Gastrocnemius medialis (tissue), 4 donors: ENCODE measurements at regions of chr3 and their contacts with region 1.

Region 1: GRCh38 chr3:22960105-22960984 is 242.8 kb upstream of the UBE2E2 start:
- DNase-seq: peak in 1 of 2 donors; percentile 20
- ATAC-seq: peak in 1 of 2 donors; percentile 47
- H3K4me3 ChIP-seq: peak overlapping the region in 3 of 4 donors; percentile 23 to 33 (median 24)
- H3K27ac ChIP-seq: no peak overlapping the region
- H3K4me1 ChIP-seq: peaks cover 4 to 7% of the 10 kb centered on the region in 2 donors
- H3K27me3 ChIP-seq: no peaks in the 10 kb centered on the region
- CTCF ChIP-seq: peak; percentile 51 to 73 (median 65)
- POLR2A ChIP-seq: no peak

Region 2: GRCh38 chr3:22175947-22176346 is 784.4 kb before region 1 on chr3:
- in situ Hi-C with region 1: no loop called
- intact Hi-C with region 1: loop called (anchors 10 kb)
- DNase-seq: no peak
- ATAC-seq: no peak
- H3K4me3 ChIP-seq: no peak overlapping the region
- H3K27ac ChIP-seq: no peak overlapping the region
- H3K4me1 ChIP-seq: no peaks in the 10 kb centered on the region
- H3K27me3 ChIP-seq: no peaks in the 10 kb centered on the region
- CTCF ChIP-seq: no peak
- POLR2A ChIP-seq: no peak

Region 3: GRCh38 chr3:22555753-22556435 is 404.5 kb before region 1 on chr3:
- in situ Hi-C with region 1: loop called (anchors 10 to 25 kb)
- intact Hi-C with region 1: no loop called
- DNase-seq: no peak
- ATAC-seq: no peak
- H3K4me3 ChIP-seq: no peak overlapping the region
- H3K27ac ChIP-seq: no peak overlapping the region
- H3K4me1 ChIP-seq: no peaks in the 10 kb centered on the region
- H3K27me3 ChIP-seq: no peaks in the 10 kb centered on the region
- CTCF ChIP-seq: no peak
- POLR2A ChIP-seq: no peak

Region 4: GRCh38 chr3:22565393-22565792 is 395.0 kb before region 1 on chr3:
- in situ Hi-C with region 1: loop called (anchors 10 to 25 kb)
- intact Hi-C with region 1: no loop called
- DNase-seq: no peak
- ATAC-seq: no peak
- H3K4me3 ChIP-seq: no peak overlapping the region
- H3K27ac ChIP-seq: no peak overlapping the region
- H3K4me1 ChIP-seq: no peaks in the 10 kb centered on the region
- H3K27me3 ChIP-seq: no peaks in the 10 kb centered on the region
- CTCF ChIP-seq: no peak
- POLR2A ChIP-seq: no peak

Region 5: GRCh38 chr3:22922317-22922716 is 38.0 kb before region 1 on chr3:
- in situ Hi-C with region 1: no loop called
- intact Hi-C with region 1: loop called (anchors 2 kb)
- DNase-seq: no peak
- ATAC-seq: no peak
- H3K4me3 ChIP-seq: no peak overlapping the region
- H3K27ac ChIP-seq: no peak overlapping the region
- H3K4me1 ChIP-seq: peaks cover 4 to 15% of the 10 kb centered on the region in 2 donors
- H3K27me3 ChIP-seq: no peaks in the 10 kb centered on the region
- CTCF ChIP-seq: peak in 3 of 5 experiments; percentile 16 to 41 (median 27)
- POLR2A ChIP-seq: no peak

Region 6: DNA sequence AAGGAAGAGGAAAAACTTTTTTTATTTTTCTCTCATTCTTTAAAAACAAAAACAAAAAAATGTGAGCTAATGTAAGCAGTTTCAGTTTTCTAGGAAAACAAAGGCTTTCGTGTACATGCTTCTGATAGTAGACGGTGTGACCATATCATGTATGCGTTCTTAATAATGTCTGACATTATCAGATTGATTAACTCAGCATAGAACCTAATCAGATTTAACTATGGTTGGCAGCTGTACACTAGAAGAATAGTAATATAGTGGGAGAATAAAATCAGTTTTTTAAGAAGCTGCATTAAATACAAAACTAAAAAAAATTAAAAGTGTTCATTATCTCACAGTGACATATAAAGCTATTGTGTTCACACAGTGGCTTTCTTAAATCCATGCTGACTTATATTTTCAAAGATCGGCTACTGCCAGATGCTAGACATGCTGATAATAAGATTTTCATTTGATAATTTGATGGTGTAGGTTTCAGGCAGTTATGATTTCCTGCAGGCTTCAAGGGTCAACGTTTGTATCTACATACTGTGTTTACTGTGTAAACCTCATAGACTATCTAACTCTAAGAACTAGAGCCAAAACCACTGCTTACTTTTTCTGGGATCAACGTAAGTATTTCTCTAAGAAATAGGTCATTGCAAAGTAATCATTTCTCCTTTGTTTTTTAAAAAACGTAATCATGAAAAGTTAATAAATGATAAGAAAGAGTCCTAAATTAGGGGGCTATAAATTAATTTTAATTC is 316.7 kb after region 1 on chr3:
- in situ Hi-C with region 1: no loop called
- intact Hi-C with region 1: no loop called
- DNase-seq: no peak
- ATAC-seq: no peak
- H3K4me3 ChIP-seq: no peak overlapping the region
- H3K27ac ChIP-seq: no peak overlapping the region
- H3K4me1 ChIP-seq: peaks cover 21 to 38% of the 10 kb centered on the region in 2 donors
- H3K27me3 ChIP-seq: no peaks in the 10 kb centered on the region
- CTCF ChIP-seq: no peak
- POLR2A ChIP-seq: no peak